Activated CD4-positive, alpha-beta memory T cell treated with anti-CD3 and anti-CD28 coated beads, Interleukin-2, amount 10 ng/mL, durations not matched to agents 7 days and 5 days (primary cell): ENCODE measurements at regions of chr6 and their contacts with region 1.

Region 1: GRCh38 chr6:110958329-110959192 is at the start of gene GTF3C6:
- DNase-seq: peak; percentile 95
- H3K4me3 Mint-ChIP-seq: peak within 1 kb of the TSS; percentile 95
- H3K27ac Mint-ChIP-seq: peak within 1 kb of the TSS; percentile 95
- H3K4me1 Mint-ChIP-seq: peaks cover 19% of the 10 kb centered on the region
- H3K27me3 Mint-ChIP-seq: no peaks in the 10 kb centered on the region
- total RNA-seq, gene GTF3C6: 83.2 to 93.3 TPM

Region 2: GRCh38 chr6:110897433-110897832 is 61.1 kb before region 1 on chr6:
- CTCF ChIA-PET with region 1: no interaction called
- POLR2A ChIA-PET with region 1: no interaction called
- DNase-seq: no peak
- H3K4me3 Mint-ChIP-seq: no peak overlapping the region
- H3K27ac Mint-ChIP-seq: no peak overlapping the region
- H3K4me1 Mint-ChIP-seq: no peaks in the 10 kb centered on the region
- H3K27me3 Mint-ChIP-seq: no peaks in the 10 kb centered on the region

Region 3: DNA sequence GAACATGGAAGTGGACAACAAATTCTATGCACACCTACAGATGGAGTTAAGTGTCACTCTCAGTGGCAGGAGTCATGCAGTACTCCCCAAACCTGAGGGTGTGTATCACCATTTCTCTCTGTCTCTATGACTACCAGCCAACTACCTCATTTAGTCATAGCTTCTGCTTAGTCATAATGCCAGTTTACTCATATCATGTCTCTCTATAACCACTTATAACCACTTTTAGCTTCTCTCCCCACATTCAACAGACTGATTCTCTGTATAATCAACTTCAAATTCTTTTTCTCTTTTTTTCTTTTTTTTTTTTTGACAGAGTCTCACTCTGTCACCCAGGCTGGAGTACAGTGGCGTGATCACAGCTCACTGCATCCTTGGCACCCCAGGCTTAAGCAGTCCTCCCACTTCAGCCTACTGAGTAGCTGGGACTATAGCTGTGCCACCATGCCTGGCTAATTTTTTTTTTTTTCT is 13.8 kb before region 1 on chr6:
- CTCF ChIA-PET with region 1: interaction called, 8 read pairs
- POLR2A ChIA-PET with region 1: interaction called, 38 read pairs
- DNase-seq: peak; percentile 55
- H3K4me3 Mint-ChIP-seq: no peak overlapping the region
- H3K27ac Mint-ChIP-seq: peak overlapping the region; percentile 75
- H3K4me1 Mint-ChIP-seq: peaks cover 13% of the 10 kb centered on the region
- H3K27me3 Mint-ChIP-seq: no peaks in the 10 kb centered on the region

Region 4: GRCh38 chr6:110971468-110971867 is 12.9 kb after region 1 on chr6:
- CTCF ChIA-PET with region 1: interaction called, 4 read pairs
- POLR2A ChIA-PET with region 1: interaction called, 12 read pairs
- DNase-seq: no peak
- H3K4me3 Mint-ChIP-seq: no peak overlapping the region
- H3K27ac Mint-ChIP-seq: no peak overlapping the region
- H3K4me1 Mint-ChIP-seq: peaks cover 2% of the 10 kb centered on the region
- H3K27me3 Mint-ChIP-seq: no peaks in the 10 kb centered on the region

Region 5: DNA sequence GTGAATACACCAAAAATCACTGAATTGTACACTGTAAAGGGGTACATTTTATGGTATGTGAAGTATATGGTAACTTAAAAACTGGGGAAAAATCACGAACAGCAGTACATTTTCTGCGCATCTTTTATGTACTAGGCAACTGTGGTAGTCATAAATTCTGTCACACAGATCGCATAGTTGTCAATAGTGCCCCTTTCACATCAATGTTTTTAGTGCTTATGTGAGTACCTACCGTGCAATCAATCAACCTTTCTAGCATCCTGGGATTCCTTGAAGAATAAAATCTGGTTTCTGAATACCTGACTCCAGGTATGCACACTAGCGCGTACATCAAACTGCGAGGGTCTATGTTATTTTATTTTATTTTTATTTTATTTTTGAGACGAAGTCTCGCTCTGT is 22.6 kb after region 1 on chr6:
- CTCF ChIA-PET with region 1: interaction called, 11 read pairs
- POLR2A ChIA-PET with region 1: interaction called, 64 read pairs
- DNase-seq: no peak
- H3K4me3 Mint-ChIP-seq: peak overlapping the region; percentile 99
- H3K27ac Mint-ChIP-seq: peak overlapping the region; percentile 97
- H3K4me1 Mint-ChIP-seq: peaks cover 54% of the 10 kb centered on the region
- H3K27me3 Mint-ChIP-seq: no peaks in the 10 kb centered on the region

Region 6: GRCh38 chr6:111038534-111039252 is 80.1 kb after region 1 on chr6:
- CTCF ChIA-PET with region 1: no interaction called
- POLR2A ChIA-PET with region 1: no interaction called
- DNase-seq: no peak
- H3K4me3 Mint-ChIP-seq: no peak overlapping the region
- H3K27ac Mint-ChIP-seq: no peak overlapping the region
- H3K4me1 Mint-ChIP-seq: peaks cover 5% of the 10 kb centered on the region
- H3K27me3 Mint-ChIP-seq: peaks cover 7% of the 10 kb centered on the region